Dorsolateral prefrontal cortex (tissue), 120 donors: ENCODE measurements at regions of chr1 and their contacts with region 1.

Region 1: DNA sequence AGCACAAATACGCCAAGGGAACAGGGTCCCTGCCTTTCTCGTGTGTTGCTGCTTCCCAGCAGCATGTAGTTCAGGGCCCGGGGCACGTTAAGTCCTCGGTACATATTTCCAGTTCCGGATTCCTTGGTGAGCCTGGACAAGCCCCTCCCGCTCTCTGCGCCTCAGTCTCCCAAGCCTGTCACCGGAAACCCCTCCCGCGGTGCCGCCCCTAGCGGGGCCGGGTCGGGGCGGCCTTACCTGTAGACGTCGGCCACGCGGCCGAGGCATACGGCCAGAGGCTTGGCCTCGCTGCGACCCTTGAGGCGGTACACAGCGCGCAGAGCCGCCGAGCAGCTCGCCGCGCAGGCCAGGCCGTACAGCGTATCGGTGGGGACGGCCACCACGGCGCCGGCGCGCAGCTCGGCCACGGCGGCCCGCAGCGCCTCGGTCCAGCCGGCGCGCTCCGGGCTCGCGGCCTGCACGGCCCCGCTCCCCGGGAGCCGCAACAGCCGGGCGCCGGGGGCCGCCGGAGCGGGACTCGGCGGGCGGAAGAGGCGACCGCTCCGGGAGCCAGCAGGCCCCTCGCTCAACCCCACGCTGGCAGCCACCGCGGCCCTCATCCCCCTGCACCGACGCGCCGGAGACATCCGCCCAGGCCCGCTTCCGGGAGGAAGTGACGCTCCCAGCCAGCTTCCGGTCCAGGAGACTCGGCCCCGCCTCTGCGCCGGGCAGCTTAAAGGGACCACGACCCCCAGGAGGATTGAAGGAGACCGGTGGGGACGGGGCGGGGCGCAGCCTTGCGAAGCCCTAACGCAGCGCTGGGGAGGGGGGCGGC is at the starts of genes C1orf122 and YRDC:
- DNase-seq: peak; percentile 93 to 98 (median 96)
- H3K4me3 ChIP-seq: peak within 1 kb of the TSS; percentile 68 to 97 (median 90)
- H3K27ac ChIP-seq: peak within 1 kb of the TSS; percentile 61 to 100 (median 97)
- H3K27me3 ChIP-seq: no peaks in the 10 kb centered on the region
- CTCF ChIP-seq: peak in 4 of 56 donors; percentile 7 to 18 (median 16)
- total RNA-seq, gene C1orf122: 49.0 to 111 (median 68.1) TPM
- total RNA-seq, gene YRDC: 6.0 to 15.3 (median 10.2) TPM

Region 2: DNA sequence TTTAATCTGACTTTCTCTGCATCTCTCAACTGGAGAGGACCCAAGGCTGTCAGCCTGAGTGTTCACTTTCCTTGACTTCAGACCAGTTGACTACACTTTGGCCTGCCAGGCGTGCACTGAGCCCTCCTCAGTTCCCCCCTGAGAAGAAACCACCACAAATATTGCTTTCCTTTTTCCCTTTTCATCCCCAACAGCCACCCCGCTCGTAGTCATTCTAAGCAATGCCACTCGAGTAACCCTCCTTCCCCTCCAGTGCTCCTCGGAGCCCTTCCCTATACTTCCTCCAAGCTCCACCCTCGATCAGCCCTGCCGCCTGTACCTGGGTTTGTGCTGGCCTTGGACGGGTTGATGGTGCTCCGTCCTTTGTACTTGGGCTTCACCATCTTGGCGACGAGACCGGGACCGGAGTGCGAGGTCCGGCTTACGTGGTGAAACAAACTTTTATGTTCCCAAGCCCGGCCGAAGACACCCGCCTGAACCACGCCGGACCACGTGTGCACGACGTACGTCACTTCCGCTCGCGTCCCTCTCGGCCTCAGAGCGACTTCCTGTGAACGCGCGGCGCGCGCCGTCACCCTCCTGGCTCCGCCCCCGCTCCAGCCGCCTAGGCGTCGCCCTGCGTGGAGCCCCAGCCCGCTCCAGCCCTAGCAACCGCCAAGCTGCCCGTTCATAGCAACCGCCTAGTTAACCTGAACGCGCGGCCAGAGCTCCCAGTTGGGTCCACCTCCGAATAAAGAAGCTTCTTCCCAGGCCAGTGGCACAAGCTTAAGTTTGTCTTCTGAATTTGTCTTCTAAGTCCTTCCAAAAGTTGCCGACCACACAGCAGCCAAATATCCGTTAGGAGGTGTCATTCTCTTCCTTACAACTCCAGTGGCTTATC is 212.1 kb before region 1 on chr1 and contains the start of gene GNL2:
- intact Hi-C with region 1: loop called in 1 of 2 experiments (anchors 10 kb)
- DNase-seq: peak; percentile 93 to 98 (median 96)
- H3K4me3 ChIP-seq: peak within 1 kb of the TSS; percentile 63 to 99 (median 91)
- H3K27ac ChIP-seq: peak within 1 kb of the TSS in 51 of 59 donors; percentile 11 to 89 (median 57)
- H3K27me3 ChIP-seq: no peaks in the 10 kb centered on the region
- CTCF ChIP-seq: peak in 42 of 56 donors; percentile 9 to 61 (median 32)
- total RNA-seq, gene GNL2: 13.0 to 31.1 (median 20.2) TPM

Region 3: DNA sequence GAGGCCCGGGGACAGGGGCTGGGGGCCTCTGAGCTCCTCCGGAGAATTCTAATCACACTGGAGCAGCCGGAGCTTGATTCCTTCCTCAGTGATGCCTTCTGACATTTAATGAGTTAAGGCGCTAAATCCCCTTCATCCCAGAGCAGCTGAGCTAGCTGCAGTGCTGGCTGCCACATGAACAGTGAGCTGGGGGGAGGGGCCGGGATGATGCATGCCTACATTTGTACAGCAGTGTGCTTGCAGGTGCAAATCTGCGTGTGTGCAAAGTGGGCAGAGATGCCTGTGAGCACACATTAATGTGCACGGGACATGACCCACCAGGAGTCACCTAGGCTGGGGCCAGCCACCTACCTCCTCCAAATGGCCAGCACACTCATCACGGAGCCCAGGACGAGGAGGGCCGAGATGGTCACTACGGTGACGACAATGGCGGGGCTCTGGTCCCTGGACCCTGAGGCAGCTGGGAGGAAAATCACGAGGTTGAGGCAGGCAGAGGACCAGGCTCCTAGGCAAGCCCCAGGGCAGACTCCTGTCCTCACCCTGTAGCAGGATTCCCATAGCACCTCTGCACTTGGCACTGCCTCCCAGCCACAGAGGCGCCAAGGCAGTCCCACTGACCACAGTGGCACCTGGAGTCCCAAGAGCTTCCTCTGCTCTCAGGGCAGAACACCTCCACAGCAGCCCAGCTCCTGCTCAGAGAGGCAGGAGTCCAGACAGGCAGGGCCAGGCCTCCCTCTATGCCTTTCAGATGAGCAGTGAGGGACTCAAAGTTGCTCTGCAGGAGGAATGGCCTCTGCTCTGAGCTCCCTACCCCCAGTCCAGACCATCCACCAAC is 80.8 kb before region 1 on chr1:
- intact Hi-C with region 1: loop called (anchors 5 kb)
- DNase-seq: peak in 2 of 10 donors; percentile 55 to 66
- H3K4me3 ChIP-seq: no peak overlapping the region
- H3K27ac ChIP-seq: peak overlapping the region in 43 of 59 donors; percentile 10 to 93 (median 64)
- H3K27me3 ChIP-seq: no peaks in the 10 kb centered on the region
- CTCF ChIP-seq: no peak

Region 4: DNA sequence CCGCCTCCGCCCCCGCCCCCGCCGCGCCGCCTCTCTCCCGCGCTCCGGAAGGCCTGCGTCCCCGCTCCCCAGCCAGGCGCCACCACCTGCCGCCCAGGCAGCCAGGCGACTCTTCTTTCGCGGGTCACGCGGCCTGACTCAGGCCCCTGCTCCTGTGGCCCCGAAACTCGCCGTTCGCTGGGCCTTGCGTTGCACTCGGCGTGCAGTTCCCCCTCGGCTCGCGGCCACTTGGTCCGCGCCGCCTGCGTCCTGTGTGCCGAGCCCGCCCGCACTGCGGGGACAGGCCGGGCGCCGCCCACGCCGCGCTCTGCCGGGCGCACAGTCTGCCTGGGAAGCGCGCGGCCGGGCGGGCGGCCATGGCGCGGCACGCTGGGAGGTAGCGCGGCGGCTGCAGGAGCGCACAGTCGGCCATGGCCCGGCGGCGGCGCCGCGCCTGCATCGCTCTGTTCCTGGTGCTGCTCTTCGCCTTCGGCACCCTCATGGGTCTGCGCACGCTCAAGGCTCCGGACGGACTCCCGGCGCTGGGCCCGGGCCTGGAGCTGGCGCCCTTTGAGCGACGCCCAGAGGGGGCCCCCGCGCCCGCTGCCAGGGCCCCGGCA is 13.9 kb before region 1 on chr1 and contains the start of gene MANEAL:
- intact Hi-C with region 1: loop called in 1 of 2 experiments (anchors 2 kb)
- DNase-seq: peak in 8 of 10 donors; percentile 31 to 78 (median 56)
- H3K4me3 ChIP-seq: peak within 1 kb of the TSS; percentile 39 to 79 (median 65)
- H3K27ac ChIP-seq: peak within 1 kb of the TSS in 46 of 59 donors; percentile 1 to 84 (median 64)
- H3K27me3 ChIP-seq: no peaks in the 10 kb centered on the region
- CTCF ChIP-seq: peak in 1 of 56 donors; percentile 3
- total RNA-seq, gene MANEAL: 10.6 to 32.4 (median 23.2) TPM

Region 5: GRCh38 chr1:37859507-37860345 is 52.0 kb after region 1 on chr1 and contains the start of gene MTF1:
- intact Hi-C with region 1: loop called (anchors 1 kb)
- DNase-seq: peak; percentile 89 to 98 (median 97)
- H3K4me3 ChIP-seq: peak within 1 kb of the TSS; percentile 76 to 100 (median 93)
- H3K27ac ChIP-seq: peak within 1 kb of the TSS; percentile 60 to 95 (median 88)
- H3K27me3 ChIP-seq: no peaks in the 10 kb centered on the region
- CTCF ChIP-seq: peak; percentile 68 to 98 (median 89)
- total RNA-seq, gene MTF1: 12.4 to 40.5 (median 22.6) TPM

Region 6: GRCh38 chr1:37946703-37947360 is 139.1 kb after region 1 on chr1 and contains the start of gene INPP5B:
- intact Hi-C with region 1: loop called in 1 of 2 experiments (anchors 2 kb)
- DNase-seq: peak; percentile 86 to 97 (median 95)
- H3K4me3 ChIP-seq: peak within 1 kb of the TSS; percentile 60 to 97 (median 87)
- H3K27ac ChIP-seq: peak within 1 kb of the TSS; percentile 48 to 97 (median 89)
- H3K27me3 ChIP-seq: no peaks in the 10 kb centered on the region
- CTCF ChIP-seq: peak in 50 of 56 donors; percentile 19 to 63 (median 41)
- total RNA-seq, gene INPP5B: 23.9 to 71.7 (median 40.7) TPM